T-cell (primary cell): ENCODE measurements at regions of chr4 and their contacts with region 1.

Region 1: GRCh38 chr4:119746951-119747350 is 118.3 kb upstream of the PDE5A start:
- DNase-seq: no peak
- ATAC-seq: no peak
- H3K4me3 ChIP-seq: no peak overlapping the region
- H3K4me3 Mint-ChIP-seq: no peak overlapping the region
- H3K27ac ChIP-seq: no peak overlapping the region
- H3K27ac Mint-ChIP-seq: no peak overlapping the region
- H3K4me1 ChIP-seq: no peaks in the 10 kb centered on the region
- H3K4me1 Mint-ChIP-seq: no peaks in the 10 kb centered on the region
- H3K27me3 ChIP-seq: no peaks in the 10 kb centered on the region
- H3K27me3 Mint-ChIP-seq: peaks cover 10 to 19% of the 10 kb centered on the region in 2 donors

Region 2: GRCh38 chr4:119615068-119615719 is 131.8 kb before region 1 on chr4:
- CTCF ChIA-PET with region 1: no interaction called
- POLR2A ChIA-PET with region 1: no interaction called
- DNase-seq: no peak
- ATAC-seq: no peak
- H3K4me3 ChIP-seq: no peak overlapping the region
- H3K4me3 Mint-ChIP-seq: no peak overlapping the region
- H3K27ac ChIP-seq: no peak overlapping the region
- H3K27ac Mint-ChIP-seq: no peak overlapping the region
- H3K4me1 ChIP-seq: no peaks in the 10 kb centered on the region
- H3K4me1 Mint-ChIP-seq: no peaks in the 10 kb centered on the region
- H3K27me3 ChIP-seq: peaks cover 0 to 2% of the 10 kb centered on the region in 2 experiments
- H3K27me3 Mint-ChIP-seq: peaks cover 13 to 15% of the 10 kb centered on the region in 2 donors

Region 3: DNA sequence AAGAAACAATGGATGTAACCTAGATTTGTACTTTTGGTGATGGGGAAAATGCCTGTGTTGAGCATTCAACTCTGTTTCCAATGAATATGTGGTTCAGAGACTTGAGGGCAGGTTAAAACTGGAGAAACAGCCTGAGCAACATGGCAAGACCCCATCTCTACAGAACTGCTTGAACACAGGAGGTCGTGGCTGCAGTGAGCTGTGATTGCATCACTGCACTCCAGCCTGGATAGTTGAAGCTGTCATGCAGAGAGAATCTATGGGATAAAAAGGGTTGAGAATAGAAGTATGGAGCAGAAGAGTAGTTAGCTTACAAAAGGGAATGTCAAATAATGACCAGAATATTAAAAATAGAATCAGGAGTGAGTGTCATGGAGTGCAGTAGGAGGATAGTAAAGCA is 16.4 kb after region 1 on chr4:
- CTCF ChIA-PET with region 1: no interaction called
- POLR2A ChIA-PET with region 1: no interaction called
- DNase-seq: no peak
- ATAC-seq: no peak
- H3K4me3 ChIP-seq: no peak overlapping the region
- H3K4me3 Mint-ChIP-seq: no peak overlapping the region
- H3K27ac ChIP-seq: no peak overlapping the region
- H3K27ac Mint-ChIP-seq: no peak overlapping the region
- H3K4me1 ChIP-seq: no peaks in the 10 kb centered on the region
- H3K4me1 Mint-ChIP-seq: no peaks in the 10 kb centered on the region
- H3K27me3 ChIP-seq: no peaks in the 10 kb centered on the region
- H3K27me3 Mint-ChIP-seq: peaks cover 0 to 3% of the 10 kb centered on the region in 2 donors

Region 4: GRCh38 chr4:119825696-119826095 is 78.7 kb after region 1 on chr4:
- CTCF ChIA-PET with region 1: interaction called in 1 of 2 experiments, 10 read pairs
- POLR2A ChIA-PET with region 1: no interaction called
- DNase-seq: no peak
- ATAC-seq: no peak
- H3K4me3 ChIP-seq: no peak overlapping the region
- H3K4me3 Mint-ChIP-seq: no peak overlapping the region
- H3K27ac ChIP-seq: no peak overlapping the region
- H3K27ac Mint-ChIP-seq: no peak overlapping the region
- H3K4me1 ChIP-seq: no peaks in the 10 kb centered on the region
- H3K4me1 Mint-ChIP-seq: no peaks in the 10 kb centered on the region
- H3K27me3 ChIP-seq: no peaks in the 10 kb centered on the region
- H3K27me3 Mint-ChIP-seq: no peaks in the 10 kb centered on the region

Region 5: DNA sequence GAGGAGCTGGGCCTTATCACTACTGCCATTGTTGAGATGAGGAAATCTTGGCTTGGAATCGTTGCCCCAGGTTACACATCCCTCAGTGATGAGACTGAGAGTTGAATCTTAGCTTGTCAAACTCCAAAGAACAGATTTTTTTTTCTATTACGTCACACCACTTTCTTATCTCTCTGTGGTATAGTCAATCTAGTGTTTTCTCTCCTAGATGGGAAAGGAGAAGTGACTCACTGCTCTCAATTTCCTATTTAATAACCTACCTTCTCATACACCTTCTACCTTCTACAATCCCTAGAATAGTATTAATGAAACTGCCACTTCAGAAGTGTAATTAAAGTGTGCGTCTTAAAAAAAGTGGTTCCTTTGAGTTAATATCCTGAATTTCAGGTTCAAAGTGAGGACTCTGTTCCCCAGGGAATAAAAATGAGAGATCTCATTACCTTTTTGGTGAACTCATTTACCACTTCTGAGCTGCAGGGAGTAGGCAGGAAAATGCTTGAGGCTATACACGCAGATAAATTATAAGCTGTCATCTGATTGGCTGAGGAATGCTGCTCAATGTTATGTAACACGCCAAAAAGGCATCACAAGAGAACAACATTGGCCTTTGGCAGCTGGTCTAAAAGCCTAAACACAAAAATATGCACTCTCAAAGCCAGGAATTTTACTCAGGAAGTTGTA is 260.4 kb after region 1 on chr4:
- CTCF ChIA-PET with region 1: no interaction called
- POLR2A ChIA-PET with region 1: no interaction called
- DNase-seq: no peak
- ATAC-seq: no peak
- H3K4me3 ChIP-seq: no peak overlapping the region
- H3K4me3 Mint-ChIP-seq: no peak overlapping the region
- H3K27ac ChIP-seq: no peak overlapping the region
- H3K27ac Mint-ChIP-seq: no peak overlapping the region
- H3K4me1 ChIP-seq: no peaks in the 10 kb centered on the region
- H3K4me1 Mint-ChIP-seq: no peaks in the 10 kb centered on the region
- H3K27me3 ChIP-seq: peaks cover 0 to 3% of the 10 kb centered on the region in 2 experiments
- H3K27me3 Mint-ChIP-seq: peaks cover 0 to 16% of the 10 kb centered on the region in 2 donors